A549 (cell line): ENCODE measurements at regions of chr2 and their contacts with region 1.

Region 1: DNA sequence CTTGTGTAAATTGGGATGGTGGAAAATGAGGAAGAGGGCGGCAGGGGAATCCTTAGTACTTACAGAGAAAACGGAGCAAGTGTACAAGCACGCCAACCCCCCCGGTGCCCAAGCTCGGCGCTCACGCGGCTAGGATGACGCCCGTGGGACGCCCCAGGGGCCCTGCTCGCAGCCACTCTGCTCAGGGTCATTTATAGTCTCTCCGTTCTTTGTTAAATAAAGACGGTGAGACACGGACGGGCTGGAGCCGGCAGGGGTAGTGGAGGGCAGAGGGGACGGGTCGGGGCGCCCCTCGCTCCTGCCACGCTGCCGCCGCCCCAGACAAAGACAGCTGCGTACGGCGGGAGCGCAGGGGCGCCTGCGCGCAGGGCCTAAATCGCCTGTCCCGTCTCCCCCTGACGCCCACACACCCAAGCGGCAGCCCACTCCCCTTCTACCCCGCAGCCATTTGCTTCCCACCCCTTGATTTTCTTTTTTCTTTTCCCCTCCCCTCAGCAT is 37.8 kb downstream of the PCBP1 start:
- DNase-seq: peak; percentile 70 to 71
- ATAC-seq: peak; percentile 83 to 86
- H3K4me3 ChIP-seq: peak overlapping the region; percentile 52
- H3K27ac ChIP-seq: peak overlapping the region; percentile 96 to 99
- H3K4me1 ChIP-seq: peaks cover 34% of the 10 kb centered on the region
- CTCF ChIP-seq: 0 out of 3 replicates have a peak, but pooled peaks have one; percentile 3
- EP300 ChIP-seq: no peak
- POLR2A ChIP-seq: peak; percentile 75; the same call in 1 of the 2 replicates
- RAD21 ChIP-seq: no peak

Region 2: GRCh38 chr2:69890881-69891280 is 234.2 kb before region 1 on chr2:
- CTCF ChIA-PET with region 1: no interaction called
- POLR2A ChIA-PET with region 1: no interaction called
- DNase-seq: no peak
- ATAC-seq: 0 out of 6 replicates have a peak, but pooled peaks of 1 of the 2 experiments have one; percentile 3
- H3K4me3 ChIP-seq: no peak overlapping the region
- H3K27ac ChIP-seq: no peak overlapping the region
- H3K4me1 ChIP-seq: peaks cover 8% of the 10 kb centered on the region; the same call in 2 of the 3 replicates
- CTCF ChIP-seq: no peak
- EP300 ChIP-seq: no peak
- POLR2A ChIP-seq: no peak
- RAD21 ChIP-seq: no peak

Region 3: DNA sequence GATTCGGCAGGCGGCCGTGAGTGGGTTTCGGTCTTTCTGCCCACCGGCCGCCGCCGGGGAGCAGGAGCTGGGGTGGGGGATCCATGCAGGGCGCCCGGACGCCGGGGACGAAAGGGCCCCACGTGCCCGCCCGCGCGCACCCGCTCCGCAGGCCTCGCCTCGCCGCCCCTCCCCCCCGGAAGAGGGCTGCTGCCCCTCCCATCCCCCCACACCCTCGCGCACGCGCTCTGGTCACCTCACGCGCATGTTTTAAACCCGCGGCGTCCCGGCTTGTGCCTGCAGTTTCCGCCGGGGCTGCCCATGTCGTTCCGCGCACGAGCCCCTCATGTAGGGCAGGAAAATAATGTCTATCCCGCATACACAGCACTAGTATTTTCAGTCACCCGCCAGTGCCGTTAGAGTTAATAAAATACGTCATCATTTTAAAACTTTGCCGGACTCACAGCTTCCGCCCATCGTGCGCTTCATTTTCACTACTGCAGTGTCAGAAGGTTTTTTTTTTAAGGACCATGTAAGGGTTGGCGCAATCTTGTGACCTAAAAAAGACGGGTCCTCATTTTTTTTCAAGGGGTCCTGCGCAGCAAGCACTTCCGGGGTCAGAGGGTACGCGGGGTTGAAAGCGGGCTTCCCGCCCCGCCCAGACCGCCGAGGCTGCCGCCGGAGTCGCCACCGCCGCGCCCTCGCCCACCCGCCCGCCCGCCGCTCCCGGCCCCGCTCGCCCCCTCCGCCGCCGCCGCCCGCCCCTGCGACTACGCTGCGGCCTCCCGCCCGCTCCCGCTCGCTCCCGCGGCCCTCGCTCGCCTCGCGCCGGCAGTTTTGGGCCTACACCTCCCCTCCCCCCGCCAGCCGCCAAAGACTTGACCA is 38.0 kb before region 1 on chr2 and contains the start of gene PCBP1:
- CTCF ChIA-PET with region 1: interaction called, 9 read pairs
- POLR2A ChIA-PET with region 1: interaction called, 48 read pairs
- DNase-seq: peak; percentile 96 to 97
- ATAC-seq: peak; percentile 62 to 64
- H3K4me3 ChIP-seq: peak within 1 kb of the TSS; percentile 96
- H3K27ac ChIP-seq: peak within 1 kb of the TSS; percentile 96 to 100
- H3K4me1 ChIP-seq: peaks cover 30% of the 10 kb centered on the region
- CTCF ChIP-seq: no peak
- EP300 ChIP-seq: peak in 1 of 2 experiments; percentile 48; a peak in 1 of 5 replicates
- POLR2A ChIP-seq: peak; percentile 57
- RAD21 ChIP-seq: peak in 1 of 2 experiments; percentile 0; a peak in 1 of 5 replicates
- polyA plus RNA-seq, gene PCBP1: 86.8 and 134 TPM in 2 replicates

Region 4: GRCh38 chr2:70094978-70095719 is 29.9 kb before region 1 on chr2:
- CTCF ChIA-PET with region 1: interaction called, 7 read pairs
- POLR2A ChIA-PET with region 1: interaction called, 48 read pairs
- DNase-seq: peak in 1 of 2 experiments; percentile 70
- ATAC-seq: peak; percentile 30 to 53; a peak in 4 of 6 replicates
- H3K4me3 ChIP-seq: no peak overlapping the region
- H3K27ac ChIP-seq: peak overlapping the region; percentile 44 to 62
- H3K4me1 ChIP-seq: peaks cover 29% of the 10 kb centered on the region
- CTCF ChIP-seq: no peak
- EP300 ChIP-seq: no peak
- POLR2A ChIP-seq: no peak
- RAD21 ChIP-seq: no peak

Region 5: DNA sequence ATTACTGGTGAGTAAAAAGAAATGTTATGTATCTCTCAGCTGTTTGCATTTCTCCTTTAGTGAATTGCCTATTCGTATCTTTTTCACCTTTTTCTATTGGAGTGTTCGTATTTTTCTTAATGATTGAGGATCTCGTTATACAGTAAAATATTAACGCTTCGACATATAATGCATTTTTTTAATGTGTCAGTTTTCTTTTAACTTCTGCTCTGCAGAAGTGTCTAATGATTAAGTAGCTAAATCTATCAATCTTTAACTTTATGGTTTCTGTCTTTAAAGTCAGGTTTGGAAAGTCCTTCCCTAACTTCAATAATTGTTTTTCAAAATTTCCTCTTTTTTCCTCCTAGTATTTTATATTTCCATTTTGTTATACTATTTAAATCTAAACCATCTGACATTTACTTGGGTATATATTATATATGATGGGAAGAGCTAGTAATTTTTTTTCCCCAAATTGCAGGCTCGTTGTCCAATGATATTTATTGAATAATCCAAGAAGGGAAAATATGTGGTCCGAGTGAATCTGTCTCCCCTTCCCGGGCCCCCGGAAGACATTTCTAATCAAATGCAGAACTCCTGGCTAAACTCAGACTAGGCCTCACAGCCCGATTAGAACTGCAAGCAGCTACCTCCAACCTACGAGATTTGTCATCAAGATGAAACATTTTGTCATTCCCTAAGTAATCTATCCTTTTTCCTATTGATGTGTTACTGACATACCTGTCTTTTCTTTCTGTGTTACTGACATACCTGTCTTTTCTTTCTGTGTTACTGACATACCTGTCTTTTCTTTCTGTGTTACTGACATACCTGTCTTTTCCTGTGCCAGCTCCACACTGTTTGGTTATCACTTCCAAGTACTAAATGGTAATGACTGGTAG is 20.6 kb before region 1 on chr2:
- CTCF ChIA-PET with region 1: interaction called, 3 read pairs
- POLR2A ChIA-PET with region 1: interaction called, 17 read pairs
- DNase-seq: no peak
- ATAC-seq: no peak
- H3K4me3 ChIP-seq: no peak overlapping the region
- H3K27ac ChIP-seq: peak overlapping the region; percentile 3 to 30; a peak in 4 of 6 replicates
- H3K4me1 ChIP-seq: peaks cover 35% of the 10 kb centered on the region
- CTCF ChIP-seq: no peak
- EP300 ChIP-seq: no peak
- POLR2A ChIP-seq: no peak
- RAD21 ChIP-seq: no peak

Region 6: DNA sequence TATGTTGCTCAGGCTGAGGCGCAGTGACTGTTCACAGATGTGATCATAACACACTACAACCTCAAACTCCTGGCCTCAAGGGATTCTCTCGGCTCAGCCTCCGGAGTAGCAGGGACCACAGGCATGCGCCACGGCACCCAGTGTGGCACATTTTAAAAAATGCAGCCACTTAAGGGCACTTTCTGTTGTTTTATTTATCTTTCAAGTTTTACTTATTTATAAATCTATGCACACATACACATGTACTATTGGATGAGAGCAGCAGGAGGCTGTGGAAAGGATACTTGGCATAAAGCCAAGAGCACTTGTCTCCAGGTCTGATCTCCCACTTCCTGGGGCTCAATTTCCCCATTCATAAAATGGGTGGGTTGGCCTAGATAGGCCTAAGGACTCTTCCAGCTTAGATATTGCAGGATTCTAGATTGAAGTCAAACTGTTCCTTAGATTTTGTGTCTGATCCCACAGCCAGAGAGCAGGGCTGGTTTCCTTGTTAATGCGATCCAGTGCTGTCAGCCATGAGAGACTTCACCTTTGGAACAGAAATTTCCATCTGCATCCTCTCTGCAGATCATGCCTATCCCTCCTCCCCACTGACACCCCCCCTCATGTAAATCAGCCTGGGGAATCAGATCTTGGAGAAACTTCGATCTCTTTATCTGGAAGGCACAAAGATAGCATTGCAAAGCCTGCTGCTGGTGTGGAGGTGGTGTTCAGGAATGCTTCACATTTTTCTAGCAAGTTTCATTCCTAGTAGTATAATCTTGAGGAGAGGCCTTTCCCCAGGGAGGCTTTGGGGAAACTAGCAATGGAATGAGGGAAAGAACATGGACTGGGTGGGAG is 13.1 kb before region 1 on chr2:
- CTCF ChIA-PET with region 1: interaction called, 4 read pairs
- POLR2A ChIA-PET with region 1: interaction called, 17 read pairs
- DNase-seq: no peak
- ATAC-seq: peak in 1 of 2 experiments; percentile 21; a peak in 2 of 6 replicates
- H3K4me3 ChIP-seq: no peak overlapping the region
- H3K27ac ChIP-seq: peak overlapping the region; percentile 15 to 54; a peak in 4 of 6 replicates
- H3K4me1 ChIP-seq: peaks cover 38% of the 10 kb centered on the region
- CTCF ChIP-seq: no peak
- EP300 ChIP-seq: no peak
- POLR2A ChIP-seq: no peak
- RAD21 ChIP-seq: no peak

Region 7: DNA sequence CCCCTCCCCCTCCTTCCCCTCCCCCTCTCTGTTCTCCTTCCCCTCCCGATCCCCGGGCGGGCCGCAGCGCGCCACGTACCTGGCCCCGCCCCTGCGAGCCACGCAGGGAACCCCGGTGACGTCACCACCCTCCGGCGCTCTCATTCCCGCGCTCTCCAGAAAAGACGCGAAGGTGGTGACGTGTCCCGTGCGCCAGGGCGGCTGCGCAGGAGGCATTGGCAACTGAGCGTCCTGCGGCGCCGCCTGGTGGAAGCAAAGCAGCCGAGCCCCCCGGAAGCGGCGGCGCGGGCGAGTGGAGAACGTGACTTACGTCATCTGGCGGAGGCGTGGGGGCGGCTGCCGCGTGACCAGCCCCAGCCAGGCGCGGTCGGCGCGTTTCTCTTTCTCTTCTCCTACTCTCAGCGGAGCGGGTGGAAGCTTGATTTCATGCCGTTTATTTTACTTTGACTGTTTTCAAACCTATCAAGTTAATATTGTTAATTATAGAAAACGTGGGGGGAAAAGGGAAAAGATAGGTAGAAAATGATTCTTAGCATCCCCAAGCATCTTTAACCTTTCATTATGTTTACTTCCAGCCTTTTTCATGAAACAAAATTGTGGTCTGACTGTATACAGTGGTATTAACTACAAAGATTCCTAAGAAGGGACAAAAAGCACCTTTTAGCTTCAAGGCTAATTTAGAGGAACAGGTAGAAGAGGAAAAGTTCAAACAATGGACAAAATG is 17.7 kb after region 1 on chr2:
- CTCF ChIA-PET with region 1: interaction called, 18 read pairs
- POLR2A ChIA-PET with region 1: interaction called, 156 read pairs
- DNase-seq: peak; percentile 94 to 100
- ATAC-seq: peak; percentile 74 to 77
- H3K4me3 ChIP-seq: peak overlapping the region; percentile 63
- H3K27ac ChIP-seq: peak overlapping the region; percentile 96 to 100
- H3K4me1 ChIP-seq: peaks cover 23% of the 10 kb centered on the region
- CTCF ChIP-seq: peak; percentile 99
- EP300 ChIP-seq: peak; percentile 25 to 43; a peak in 1 of 5 replicates
- POLR2A ChIP-seq: peak; percentile 79
- RAD21 ChIP-seq: peak; percentile 98 to 100

Region 8: DNA sequence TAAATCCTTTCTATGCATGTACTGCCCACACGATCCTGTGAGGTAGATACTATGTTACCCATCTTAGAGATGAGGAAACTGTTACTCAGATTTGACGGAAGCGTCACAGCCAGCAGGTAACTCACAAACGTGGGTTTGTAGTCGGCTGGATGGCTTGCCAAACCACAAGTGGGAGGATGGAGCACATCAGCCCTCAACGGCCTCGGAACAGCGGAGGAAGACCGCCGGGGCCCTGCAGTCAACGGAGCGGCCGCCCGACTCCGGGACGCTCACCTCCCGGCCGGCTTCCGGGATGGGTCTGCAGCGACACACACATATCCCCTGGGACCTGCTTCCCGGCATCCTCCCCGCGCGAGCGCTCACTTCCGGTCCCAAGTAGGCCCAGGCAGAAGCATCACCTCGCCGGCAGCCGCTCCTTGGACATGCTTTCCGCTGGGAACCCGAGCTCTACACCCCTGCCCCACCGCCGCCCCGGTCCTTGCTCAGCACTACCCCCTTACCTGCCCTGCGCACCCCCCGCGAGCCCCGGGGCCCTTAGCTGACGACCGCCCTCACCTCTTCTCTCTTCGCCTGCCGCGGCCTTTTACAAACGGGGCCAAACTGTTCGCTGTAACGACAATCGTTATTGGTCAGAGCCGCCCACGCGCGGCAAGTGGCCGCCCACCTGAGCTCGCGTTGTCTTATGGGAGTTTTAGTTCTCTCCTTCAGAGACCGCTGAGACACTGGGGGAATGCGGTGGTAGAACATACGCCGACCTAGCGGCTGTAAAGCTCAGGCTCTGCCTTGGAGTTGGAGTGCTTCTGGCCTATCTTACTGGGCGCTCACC is 65.6 kb after region 1 on chr2 and contains the start of gene C2orf42:
- CTCF ChIA-PET with region 1: no interaction called
- POLR2A ChIA-PET with region 1: interaction called, 16 read pairs
- DNase-seq: peak; percentile 99 to 100
- ATAC-seq: peak; percentile 97 to 98
- H3K4me3 ChIP-seq: peak within 1 kb of the TSS; percentile 75
- H3K27ac ChIP-seq: peak within 1 kb of the TSS; percentile 92 to 97
- H3K4me1 ChIP-seq: peaks cover 14% of the 10 kb centered on the region
- CTCF ChIP-seq: no peak
- EP300 ChIP-seq: no peak
- POLR2A ChIP-seq: peak; percentile 99
- RAD21 ChIP-seq: peak in 1 of 2 experiments; percentile 20; a peak in 1 of 5 replicates
- polyA plus RNA-seq, gene C2orf42: 10.4 and 14.8 TPM in 2 replicates

Region 9: GRCh38 chr2:70214953-70215549 is 90.0 kb after region 1 on chr2:
- CTCF ChIA-PET with region 1: no interaction called
- POLR2A ChIA-PET with region 1: no interaction called
- DNase-seq: no peak
- ATAC-seq: no peak
- H3K4me3 ChIP-seq: no peak overlapping the region
- H3K27ac ChIP-seq: no peak overlapping the region
- H3K4me1 ChIP-seq: 0 out of 3 replicates have a peak, but pooled peaks cover 4% of the 10 kb centered on the region
- CTCF ChIP-seq: no peak
- EP300 ChIP-seq: no peak
- POLR2A ChIP-seq: no peak
- RAD21 ChIP-seq: no peak

Region 10: GRCh38 chr2:70248181-70248847 is 123.3 kb after region 1 on chr2 and contains the start of gene TIA1:
- CTCF ChIA-PET with region 1: no interaction called
- POLR2A ChIA-PET with region 1: no interaction called
- DNase-seq: peak; percentile 97 to 99
- ATAC-seq: peak; percentile 94 to 97
- H3K4me3 ChIP-seq: peak within 1 kb of the TSS; percentile 70
- H3K27ac ChIP-seq: peak within 1 kb of the TSS; percentile 93 to 97
- H3K4me1 ChIP-seq: peaks cover 22% of the 10 kb centered on the region
- CTCF ChIP-seq: no peak
- EP300 ChIP-seq: no peak
- POLR2A ChIP-seq: peak; percentile 74
- RAD21 ChIP-seq: no peak
- polyA plus RNA-seq, gene TIA1: 148 and 173 TPM in 2 replicates

Region 11: DNA sequence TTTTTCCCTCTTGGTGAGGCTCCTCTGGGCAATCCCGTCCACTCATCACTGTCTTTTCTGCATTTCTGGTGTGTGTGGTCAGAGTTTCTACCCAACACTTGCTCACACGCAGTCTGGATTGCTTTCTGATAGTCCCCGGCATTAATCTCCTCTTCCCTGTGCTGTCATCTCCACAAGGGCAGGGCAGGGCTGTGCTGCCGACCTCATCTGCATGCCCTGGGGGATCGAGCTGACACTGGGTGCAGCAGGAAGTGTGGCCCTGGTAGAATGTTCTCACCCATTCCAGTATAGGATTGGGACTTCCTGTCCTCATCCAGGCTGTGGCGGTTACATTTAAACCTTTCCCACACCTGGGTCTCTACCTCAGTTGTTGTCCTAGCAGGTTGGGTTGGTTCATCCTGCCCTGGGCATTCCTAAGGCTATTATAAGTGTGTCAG is 256.8 kb after region 1 on chr2:
- CTCF ChIA-PET with region 1: no interaction called
- POLR2A ChIA-PET with region 1: no interaction called
- DNase-seq: peak in 1 of 2 experiments; percentile 20
- ATAC-seq: peak; percentile 44 to 55; a peak in 1 of 6 replicates
- H3K4me3 ChIP-seq: no peak overlapping the region
- H3K27ac ChIP-seq: no peak overlapping the region
- H3K4me1 ChIP-seq: no peaks in the 10 kb centered on the region
- CTCF ChIP-seq: no peak
- EP300 ChIP-seq: no peak
- POLR2A ChIP-seq: no peak
- RAD21 ChIP-seq: no peak